Sigmoid colon (tissue), 7 donors: ENCODE measurements at regions of chr16 and their contacts with region 1.

Region 1: GRCh38 chr16:19886073-19886941 is 1.7 kb upstream of the GPRC5B start:
- DNase-seq: peak; percentile 86
- H3K4me3 ChIP-seq: peak overlapping the region in 3 of 4 donors; percentile 52 to 67 (median 65)
- H3K27ac ChIP-seq: no peak overlapping the region
- H3K4me1 ChIP-seq: peaks cover 0 to 31% (median 30%) of the 10 kb centered on the region in 4 donors
- H3K27me3 ChIP-seq: peaks cover 8 to 30% (median 29%) of the 10 kb centered on the region in 3 donors
- CTCF ChIP-seq: peak; percentile 99 to 100 (median 100)
- EP300 ChIP-seq: no peak
- POLR2A ChIP-seq: no peak

Region 2: GRCh38 chr16:19555162-19555937 is 331.0 kb before region 1 on chr16 and contains the start of gene VPS35L:
- intact Hi-C with region 1: loop called (anchors 1 kb)
- DNase-seq: peak; percentile 98
- H3K4me3 ChIP-seq: peak within 1 kb of the TSS; percentile 69 to 88 (median 76)
- H3K27ac ChIP-seq: peak within 1 kb of the TSS; percentile 86 to 90 (median 88)
- H3K4me1 ChIP-seq: peaks cover 0 to 18% (median 17%) of the 10 kb centered on the region in 4 donors
- H3K27me3 ChIP-seq: no peaks in the 10 kb centered on the region
- CTCF ChIP-seq: peak; percentile 64 to 72 (median 68)
- EP300 ChIP-seq: peak in 1 of 4 donors; percentile 4
- POLR2A ChIP-seq: peak in 1 of 2 donors; percentile 22
- total RNA-seq, gene VPS35L: 34.6 to 53.7 (median 47.8) TPM

Region 3: DNA sequence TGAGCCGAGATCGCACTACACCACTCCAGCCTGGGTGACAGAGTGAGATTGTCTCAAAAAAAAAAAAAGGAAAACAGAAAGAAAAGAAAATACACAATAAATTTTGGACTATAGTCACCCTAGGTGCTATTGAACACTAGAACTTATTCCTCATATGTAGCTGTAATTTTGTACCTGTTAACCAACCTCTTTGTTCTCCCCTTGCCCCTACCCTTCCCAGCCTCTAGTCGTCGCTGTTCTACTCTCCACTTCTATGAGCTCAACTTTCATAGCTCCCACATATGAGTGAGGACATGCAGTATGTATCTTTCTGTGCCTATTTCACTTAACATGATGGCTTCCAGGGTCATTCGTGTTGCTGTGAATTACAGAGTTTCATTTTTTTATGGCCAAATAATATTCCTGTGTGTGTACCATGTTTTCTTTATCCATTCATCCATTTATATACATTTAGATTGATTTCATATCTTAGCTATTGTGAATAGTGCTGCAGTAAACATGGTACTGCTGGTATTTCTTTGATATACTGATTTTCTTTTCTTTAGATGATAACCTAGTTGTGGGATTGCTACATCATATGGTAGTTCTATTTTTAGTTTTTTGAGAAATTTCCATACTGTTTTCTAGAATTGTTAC is 302.5 kb before region 1 on chr16:
- intact Hi-C with region 1: loop called (anchors 5 kb)
- DNase-seq: no peak
- H3K4me3 ChIP-seq: no peak overlapping the region
- H3K27ac ChIP-seq: no peak overlapping the region
- H3K4me1 ChIP-seq: peaks cover 0 to 20% (median 11%) of the 10 kb centered on the region in 4 donors
- H3K27me3 ChIP-seq: no peaks in the 10 kb centered on the region
- CTCF ChIP-seq: peak; percentile 24 to 80 (median 64)
- EP300 ChIP-seq: no peak
- POLR2A ChIP-seq: no peak

Region 4: DNA sequence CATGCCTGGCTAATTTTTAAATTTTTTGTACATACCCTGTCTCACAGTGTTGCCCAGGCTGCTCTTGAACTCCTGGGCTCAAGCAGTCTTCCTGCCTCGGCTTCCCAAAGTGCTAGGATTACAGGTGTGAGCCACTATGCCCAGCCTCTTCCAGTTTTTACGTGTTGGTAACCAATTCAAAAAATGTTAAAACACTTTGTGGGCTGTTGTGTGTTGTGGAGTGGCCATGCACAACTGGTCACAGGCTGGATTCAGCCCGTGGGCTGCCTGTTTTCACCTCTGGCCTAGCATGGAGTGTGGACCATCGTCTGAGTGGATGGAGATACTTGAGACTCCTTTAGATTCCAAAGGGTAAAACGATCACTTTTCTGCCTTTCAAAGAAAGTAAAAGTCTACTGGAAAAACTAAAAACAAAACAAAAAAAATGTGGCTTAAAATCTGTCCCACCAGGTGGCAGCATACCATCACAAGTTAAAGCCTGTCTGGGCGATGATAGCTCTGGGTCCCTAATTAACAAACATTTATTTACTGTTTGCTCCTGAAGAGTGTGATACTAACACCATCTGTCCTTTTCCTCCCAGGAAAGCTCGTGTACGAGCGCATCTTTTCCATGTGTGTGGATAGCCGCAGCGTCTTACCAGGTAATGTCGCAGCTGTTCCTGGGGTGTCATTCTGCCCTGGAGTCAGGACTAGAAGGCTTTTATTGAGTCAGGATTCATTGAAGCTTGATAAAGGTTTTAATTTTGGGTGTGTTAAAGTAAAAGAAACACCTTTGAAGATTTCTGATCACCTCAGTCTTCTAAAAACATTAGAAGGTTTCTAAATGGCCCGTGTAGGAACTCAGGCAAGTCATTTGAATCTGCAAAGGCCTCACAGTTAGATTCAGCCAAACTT is 285.0 kb before region 1 on chr16:
- intact Hi-C with region 1: loop called (anchors 2 kb)
- DNase-seq: no peak
- H3K4me3 ChIP-seq: no peak overlapping the region
- H3K27ac ChIP-seq: no peak overlapping the region
- H3K4me1 ChIP-seq: peaks cover 0 to 11% (median 1%) of the 10 kb centered on the region in 4 donors
- H3K27me3 ChIP-seq: no peaks in the 10 kb centered on the region
- CTCF ChIP-seq: peak in 3 of 4 experiments; percentile 28 to 47 (median 32)
- EP300 ChIP-seq: no peak
- POLR2A ChIP-seq: no peak

Region 5: GRCh38 chr16:19696328-19696727 is 190.0 kb before region 1 on chr16:
- intact Hi-C with region 1: no loop called
- DNase-seq: peak; percentile 90
- H3K4me3 ChIP-seq: no peak overlapping the region
- H3K27ac ChIP-seq: peak overlapping the region; percentile 28 to 72 (median 52)
- H3K4me1 ChIP-seq: peaks cover 0 to 26% (median 17%) of the 10 kb centered on the region in 4 donors
- H3K27me3 ChIP-seq: no peaks in the 10 kb centered on the region
- CTCF ChIP-seq: no peak
- EP300 ChIP-seq: peak in 1 of 4 donors; percentile 19
- POLR2A ChIP-seq: no peak

Region 6: DNA sequence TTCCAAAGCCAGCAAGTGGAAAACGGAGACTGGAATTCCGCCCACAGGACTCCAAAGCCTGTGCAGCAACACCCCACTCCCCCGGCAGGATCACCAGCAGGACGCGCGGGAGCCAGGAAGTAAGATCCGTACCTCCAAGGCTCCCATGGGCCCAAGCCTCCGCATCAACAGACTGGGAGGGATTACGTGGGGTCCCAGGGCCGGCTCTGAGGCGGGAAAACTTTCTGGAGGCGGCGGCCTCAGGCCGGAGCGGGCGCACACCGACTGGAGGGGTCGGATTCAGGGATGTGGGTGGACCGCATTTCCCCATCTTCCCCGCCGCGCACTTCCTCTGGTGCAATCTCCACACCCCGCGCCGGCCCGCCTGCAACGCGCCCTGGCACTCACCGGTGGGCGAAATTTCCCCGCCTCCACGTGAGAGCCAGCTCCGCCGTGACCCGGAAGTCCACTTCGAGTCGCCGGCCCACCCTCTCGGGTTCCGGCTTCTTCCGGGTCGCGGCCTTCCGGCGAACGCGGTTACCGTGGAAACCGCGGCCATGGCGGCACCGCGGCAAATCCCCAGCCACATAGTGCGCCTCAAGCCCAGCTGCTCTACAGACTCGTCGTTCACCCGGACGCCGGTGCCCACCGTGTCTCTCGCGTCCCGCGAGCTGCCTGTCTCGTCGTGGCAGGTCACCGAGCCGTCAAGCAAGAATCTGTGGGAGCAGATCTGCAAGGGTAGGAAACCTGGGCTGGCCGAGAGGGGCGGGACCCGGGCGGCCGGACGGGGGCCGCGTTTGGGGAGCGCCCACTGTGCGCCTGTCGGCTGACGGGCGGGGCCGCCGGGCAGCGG is 168.3 kb before region 1 on chr16 and contains the starts of genes IQCK and KNOP1:
- intact Hi-C with region 1: loop called (anchors 2 kb)
- DNase-seq: peak; percentile 96
- H3K4me3 ChIP-seq: peak within 1 kb of the TSS; percentile 80 to 98 (median 88)
- H3K27ac ChIP-seq: peak within 1 kb of the TSS; percentile 70 to 88 (median 81)
- H3K4me1 ChIP-seq: peaks cover 0 to 23% (median 21%) of the 10 kb centered on the region in 4 donors
- H3K27me3 ChIP-seq: no peaks in the 10 kb centered on the region
- CTCF ChIP-seq: peak in 1 of 4 experiments; percentile 21
- EP300 ChIP-seq: peak in 1 of 4 donors; percentile 5
- POLR2A ChIP-seq: no peak
- total RNA-seq, gene IQCK: 10.3 to 16.6 (median 12.4) TPM
- total RNA-seq, gene KNOP1: 5.0 to 11.1 (median 7.6) TPM